Left colon (tissue), 2 donors: ENCODE measurements at regions of chr6 and their contacts with region 1.

Region 1: GRCh38 chr6:116439522-116440051 is 21.6 kb upstream of the CALHM6 start:
- DNase-seq: no peak
- ATAC-seq: no peak

Region 2: DNA sequence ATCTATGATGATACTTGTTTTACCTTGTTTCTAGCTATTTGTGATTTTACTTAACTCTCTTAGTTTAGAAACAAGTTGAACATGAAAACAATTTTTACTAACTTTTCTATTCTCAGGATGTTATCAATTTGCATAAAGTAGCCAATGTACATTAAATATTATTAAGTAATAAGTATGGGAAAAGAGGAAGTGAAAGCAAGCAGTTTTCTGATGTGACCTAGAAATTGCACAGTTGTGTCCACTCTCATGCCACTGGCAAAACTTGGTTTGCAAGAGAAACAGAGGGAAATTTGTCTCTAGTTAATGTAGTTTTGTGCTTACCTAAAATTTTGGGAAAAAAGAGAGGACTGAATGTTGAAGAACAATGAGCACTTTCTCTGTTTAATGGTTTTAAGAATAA is 140.6 kb before region 1 on chr6:
- intact Hi-C with region 1: loop called in 1 of 2 experiments (anchors 10 kb)
- DNase-seq: no peak
- ATAC-seq: no peak

Region 3: GRCh38 chr6:116511404-116512110 is 72.0 kb after region 1 on chr6 and contains the start of gene CALHM5:
- intact Hi-C with region 1: no loop called
- DNase-seq: no peak
- ATAC-seq: peak; percentile 41
- total RNA-seq, gene CALHM5: 0.18 to 0.64 TPM